ENCODE measurements at regions of chr12 and their contacts with region 1.

Region 1: GRCh38 chr12:89789862-89790261 is 81.2 kb upstream of the ATP2B1 start:
- H3K4me3 Mint-ChIP-seq: no peak overlapping the region
- H3K27ac Mint-ChIP-seq: peak overlapping the region; percentile 75
- H3K4me1 Mint-ChIP-seq: peaks cover 32% of the 10 kb centered on the region
- H3K27me3 Mint-ChIP-seq: no peaks in the 10 kb centered on the region

Region 2: DNA sequence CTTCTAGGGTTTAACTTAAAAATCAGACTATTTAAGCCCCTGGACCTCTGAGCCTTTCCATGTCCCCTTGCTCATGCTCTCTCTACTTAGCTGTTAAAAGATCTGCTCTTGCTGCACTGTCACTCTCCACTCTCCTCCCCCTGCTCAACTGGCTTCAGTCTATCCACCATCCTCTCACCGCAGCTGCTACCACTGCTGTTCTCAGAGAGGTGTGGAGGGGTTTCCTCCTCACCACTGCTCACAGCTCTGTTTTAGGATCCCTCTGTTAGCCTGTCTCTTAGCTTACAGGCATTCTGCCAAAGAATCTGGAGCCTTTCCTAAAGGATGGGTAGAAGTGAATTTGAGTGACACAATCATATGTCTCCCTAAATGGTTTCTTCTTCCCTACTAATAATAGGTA is 37.5 kb before region 1 on chr12:
- intact Hi-C with region 1: no loop called
- H3K4me3 Mint-ChIP-seq: no peak overlapping the region
- H3K27ac Mint-ChIP-seq: peak overlapping the region; percentile 27
- H3K4me1 Mint-ChIP-seq: peaks cover 30% of the 10 kb centered on the region
- H3K27me3 Mint-ChIP-seq: no peaks in the 10 kb centered on the region

Region 3: GRCh38 chr12:89833337-89834252 is 43.7 kb after region 1 on chr12:
- intact Hi-C with region 1: loop called (anchors 5 kb)
- H3K4me3 Mint-ChIP-seq: no peak overlapping the region
- H3K27ac Mint-ChIP-seq: peak overlapping the region; percentile 79
- H3K4me1 Mint-ChIP-seq: peaks cover 33% of the 10 kb centered on the region
- H3K27me3 Mint-ChIP-seq: peaks cover 2% of the 10 kb centered on the region

Region 4: GRCh38 chr12:90280564-90281058 is 490.7 kb after region 1 on chr12:
- intact Hi-C with region 1: no loop called
- H3K4me3 Mint-ChIP-seq: no peak overlapping the region
- H3K27ac Mint-ChIP-seq: no peak overlapping the region
- H3K4me1 Mint-ChIP-seq: no peaks in the 10 kb centered on the region
- H3K27me3 Mint-ChIP-seq: no peaks in the 10 kb centered on the region

Region 5: DNA sequence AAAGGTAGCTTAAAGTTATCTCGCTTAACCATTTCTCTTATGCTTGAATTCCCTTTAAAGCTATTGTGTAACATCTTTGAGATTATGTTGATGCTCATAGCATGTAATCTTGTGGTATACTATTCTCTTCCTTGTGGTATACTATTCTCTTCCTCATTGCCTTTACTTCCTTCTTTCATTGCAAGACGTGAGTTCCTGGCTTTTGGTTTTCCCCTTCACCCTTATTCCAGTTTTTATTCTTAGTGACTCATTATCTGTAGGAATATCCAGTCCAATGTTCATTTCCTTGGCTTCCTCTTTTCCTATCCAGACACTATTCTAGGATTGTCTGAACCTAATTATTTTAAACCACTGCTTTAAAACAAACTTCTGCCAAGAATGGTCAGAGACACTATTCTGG is 601.1 kb after region 1 on chr12:
- intact Hi-C with region 1: no loop called
- H3K4me3 Mint-ChIP-seq: no peak overlapping the region
- H3K27ac Mint-ChIP-seq: no peak overlapping the region
- H3K4me1 Mint-ChIP-seq: peaks cover 16% of the 10 kb centered on the region
- H3K27me3 Mint-ChIP-seq: peaks cover 60% of the 10 kb centered on the region